Aorta (tissue), 5 donors: ENCODE measurements at regions of chr16 and their contacts with region 1.

Region 1: DNA sequence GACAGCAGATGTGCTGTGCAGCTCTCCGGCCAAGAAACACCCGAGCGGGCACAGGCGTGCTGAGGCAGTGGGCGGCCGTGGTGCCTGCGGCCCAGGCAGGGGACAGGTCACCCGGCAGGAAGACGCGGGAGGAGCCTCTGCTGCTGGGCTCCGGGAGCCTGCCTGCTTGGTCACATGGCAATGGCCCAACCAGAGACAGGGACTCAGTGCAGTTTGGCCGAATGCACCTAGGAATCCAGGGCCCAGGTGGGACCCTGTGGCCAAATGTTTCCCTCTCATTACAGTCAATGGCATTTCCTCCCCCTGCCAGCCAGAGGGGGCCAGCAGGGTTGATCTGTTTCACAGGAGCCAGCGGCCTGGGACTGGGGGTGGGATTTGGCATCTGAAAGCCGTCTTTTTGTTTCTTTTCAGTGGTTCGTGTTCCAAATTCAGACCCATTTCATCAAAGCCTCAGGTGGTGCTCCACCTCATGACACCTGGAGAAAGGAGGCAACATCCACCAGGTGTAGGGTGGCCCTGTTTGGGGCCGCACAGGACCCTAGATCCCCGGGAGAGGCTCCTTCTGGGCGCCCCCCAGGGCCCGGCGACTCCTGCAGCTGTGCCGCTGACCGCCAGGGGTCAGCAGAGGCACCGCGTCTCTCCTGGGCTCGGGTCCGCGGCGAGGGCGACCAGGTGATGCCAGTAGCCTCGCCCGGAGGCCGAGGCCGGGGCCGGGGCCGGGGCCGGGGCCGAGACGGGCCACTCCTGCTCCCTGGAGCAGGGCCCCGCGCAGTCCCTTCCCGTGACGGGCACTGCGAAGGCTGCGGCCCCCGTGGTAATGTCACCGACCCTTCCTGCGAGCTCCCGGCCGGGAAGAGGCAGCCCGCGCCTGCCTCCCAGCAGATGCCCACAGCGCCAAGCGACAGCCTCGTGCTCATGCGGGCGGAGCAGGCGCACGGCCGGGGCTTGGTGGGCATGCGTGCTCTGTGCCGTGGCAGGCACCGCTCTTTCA is 118.5 kb downstream of the C16orf78 start:
- DNase-seq: peak; percentile 61 to 86
- ATAC-seq: peak; percentile 85
- H3K4me3 ChIP-seq: peak overlapping the region in 1 of 2 donors; percentile 11
- H3K27ac ChIP-seq: no peak overlapping the region
- H3K4me1 ChIP-seq: no peaks in the 10 kb centered on the region
- H3K27me3 ChIP-seq: no peaks in the 10 kb centered on the region

Region 2: DNA sequence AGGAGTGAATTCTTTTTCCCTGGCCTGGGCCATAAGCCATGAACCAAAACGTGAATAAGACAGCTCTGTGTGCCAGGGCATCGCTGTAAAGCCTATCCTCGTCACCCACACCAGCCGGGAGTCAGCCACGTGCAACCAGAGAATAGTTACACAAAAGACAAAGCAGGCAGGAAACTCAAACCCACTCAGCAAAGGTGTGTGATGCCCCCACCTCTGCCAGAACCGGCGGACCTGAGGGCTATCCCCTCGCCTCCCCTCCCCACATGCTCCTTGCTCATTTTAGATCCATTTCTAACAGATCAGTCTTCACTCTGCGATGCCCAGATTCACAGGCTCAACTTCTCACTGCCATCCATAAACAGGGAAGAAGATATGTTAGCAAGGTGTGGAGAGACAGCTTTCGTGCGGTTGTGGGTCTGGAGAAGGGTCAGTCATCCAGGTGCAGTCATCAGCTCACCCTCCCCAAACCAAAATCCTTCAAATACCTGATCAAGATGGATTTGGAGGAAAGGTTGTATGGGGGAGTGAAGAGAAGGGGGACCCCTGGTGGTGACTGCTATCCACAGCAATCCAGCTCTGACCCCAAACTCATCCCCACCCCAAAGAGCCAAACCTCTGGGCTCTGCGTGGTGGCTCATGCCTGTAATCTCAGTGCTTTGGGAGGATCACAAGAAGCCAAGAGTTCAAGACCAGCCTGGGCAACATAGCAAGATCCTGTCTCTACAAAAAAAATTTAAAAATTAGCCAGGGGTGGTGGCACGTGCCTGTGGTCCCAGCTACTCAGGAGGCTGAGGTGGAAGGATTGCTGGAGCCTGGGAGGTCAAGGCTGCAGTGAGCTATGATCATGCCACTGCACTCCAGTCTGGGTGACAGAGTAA is 100.7 kb after region 1 on chr16:
- intact Hi-C with region 1: loop called (anchors 5 to 10 kb)
- DNase-seq: no peak
- ATAC-seq: peak; percentile 45
- H3K4me3 ChIP-seq: no peak overlapping the region
- H3K27ac ChIP-seq: no peak overlapping the region
- H3K4me1 ChIP-seq: no peaks in the 10 kb centered on the region
- H3K27me3 ChIP-seq: no peaks in the 10 kb centered on the region

Region 3: GRCh38 chr16:49755313-49755620 is 263.2 kb after region 1 on chr16:
- intact Hi-C with region 1: loop called in 1 of 2 experiments (anchors 5 kb)
- DNase-seq: no peak
- ATAC-seq: peak; percentile 47
- H3K4me3 ChIP-seq: peak overlapping the region in 1 of 2 donors; percentile 48
- H3K27ac ChIP-seq: no peak overlapping the region
- H3K4me1 ChIP-seq: no peaks in the 10 kb centered on the region
- H3K27me3 ChIP-seq: no peaks in the 10 kb centered on the region

Region 4: GRCh38 chr16:49860593-49860992 is 368.5 kb after region 1 on chr16:
- intact Hi-C with region 1: loop called (anchors 5 to 10 kb)
- DNase-seq: no peak
- ATAC-seq: no peak
- H3K4me3 ChIP-seq: no peak overlapping the region
- H3K27ac ChIP-seq: no peak overlapping the region
- H3K4me1 ChIP-seq: no peaks in the 10 kb centered on the region
- H3K27me3 ChIP-seq: no peaks in the 10 kb centered on the region

Region 5: GRCh38 chr16:49876716-49877129 is 384.7 kb after region 1 on chr16:
- intact Hi-C with region 1: loop called in 1 of 2 experiments (anchors 2 kb)
- DNase-seq: peak; percentile 85 to 92
- ATAC-seq: peak; percentile 92
- H3K4me3 ChIP-seq: peak overlapping the region in 1 of 2 donors; percentile 9
- H3K27ac ChIP-seq: no peak overlapping the region
- H3K4me1 ChIP-seq: no peaks in the 10 kb centered on the region
- H3K27me3 ChIP-seq: no peaks in the 10 kb centered on the region